ENCODE measurements at regions of chr2 and their contacts with region 1.

Region 1: GRCh38 chr2:240060977-240061591 is 7.8 kb upstream of the OR6B3 start:
- DNase-seq: peak; percentile 60
- H3K4me3 ChIP-seq: no peak overlapping the region
- H3K27ac ChIP-seq: no peak overlapping the region
- H3K4me1 ChIP-seq: no peaks in the 10 kb centered on the region
- H3K27me3 ChIP-seq: no peaks in the 10 kb centered on the region
- CTCF ChIP-seq: peak; percentile 34 to 51
- POLR2A ChIP-seq: no peak

Region 2: GRCh38 chr2:239519089-239519920 is 541.8 kb before region 1 on chr2:
- CTCF ChIA-PET with region 1: no interaction called
- POLR2A ChIA-PET with region 1: no interaction called
- dilution Hi-C with region 1: no loop called
- intact Hi-C with region 1: no loop called
- DNase-seq: no peak
- H3K4me3 ChIP-seq: no peak overlapping the region
- H3K27ac ChIP-seq: no peak overlapping the region
- H3K4me1 ChIP-seq: no peaks in the 10 kb centered on the region
- H3K27me3 ChIP-seq: no peaks in the 10 kb centered on the region
- CTCF ChIP-seq: no peak
- POLR2A ChIP-seq: no peak

Region 3: GRCh38 chr2:240121675-240122074 is 60.6 kb after region 1 on chr2:
- CTCF ChIA-PET with region 1: interaction called, 6 read pairs
- POLR2A ChIA-PET with region 1: no interaction called
- dilution Hi-C with region 1: no loop called
- intact Hi-C with region 1: loop called (anchors 2 kb)
- DNase-seq: no peak
- H3K4me3 ChIP-seq: no peak overlapping the region
- H3K27ac ChIP-seq: no peak overlapping the region
- H3K4me1 ChIP-seq: no peaks in the 10 kb centered on the region
- H3K27me3 ChIP-seq: no peaks in the 10 kb centered on the region
- CTCF ChIP-seq: no peak
- POLR2A ChIP-seq: no peak

Region 4: DNA sequence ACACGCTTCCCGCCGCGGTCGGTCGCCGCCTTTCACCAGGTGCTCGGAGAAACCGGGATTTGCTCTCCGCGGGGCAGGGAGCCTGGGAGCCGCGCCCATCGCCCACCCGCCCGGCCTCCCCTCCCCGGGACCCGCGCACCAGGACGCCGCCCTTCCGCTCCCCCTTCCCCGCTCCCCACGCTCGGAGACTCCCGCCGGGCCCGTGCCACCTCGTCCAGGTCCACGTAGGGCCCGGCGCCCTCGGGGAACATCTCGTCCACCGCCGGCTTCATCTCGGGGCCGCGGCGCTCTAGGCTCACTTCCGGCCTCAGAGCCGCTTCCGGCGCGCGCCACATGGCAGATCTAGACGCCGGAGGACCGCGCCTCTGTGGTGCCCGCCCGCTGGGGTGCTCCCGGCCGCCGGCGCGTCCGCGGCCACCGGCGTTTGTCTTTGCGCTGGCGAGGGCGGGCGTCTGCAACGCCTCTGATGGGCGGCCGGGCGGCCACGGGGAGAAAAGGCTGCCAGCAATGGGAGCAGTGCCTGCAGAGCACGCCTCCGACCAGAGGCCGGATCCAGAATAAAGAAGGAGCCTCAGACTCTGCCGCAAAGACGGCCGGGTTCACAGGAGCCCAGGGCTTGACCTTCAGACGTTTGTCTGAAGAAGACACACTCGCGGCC is 75.1 kb after region 1 on chr2 and contains the start of gene COPS9:
- CTCF ChIA-PET with region 1: interaction called, 199 read pairs
- POLR2A ChIA-PET with region 1: no interaction called
- dilution Hi-C with region 1: no loop called
- intact Hi-C with region 1: no loop called
- DNase-seq: peak; percentile 85
- H3K4me3 ChIP-seq: peak within 1 kb of the TSS; percentile 55 to 71 (median 59)
- H3K27ac ChIP-seq: peak within 1 kb of the TSS; percentile 58
- H3K4me1 ChIP-seq: peaks cover 9% of the 10 kb centered on the region
- H3K27me3 ChIP-seq: no peaks in the 10 kb centered on the region
- CTCF ChIP-seq: no peak
- POLR2A ChIP-seq: peak; percentile 72
- total RNA-seq, gene COPS9: 189 and 196 TPM in 2 replicates